ENCODE measurements at regions of chr2 and their contacts with region 1.

Region 1: DNA sequence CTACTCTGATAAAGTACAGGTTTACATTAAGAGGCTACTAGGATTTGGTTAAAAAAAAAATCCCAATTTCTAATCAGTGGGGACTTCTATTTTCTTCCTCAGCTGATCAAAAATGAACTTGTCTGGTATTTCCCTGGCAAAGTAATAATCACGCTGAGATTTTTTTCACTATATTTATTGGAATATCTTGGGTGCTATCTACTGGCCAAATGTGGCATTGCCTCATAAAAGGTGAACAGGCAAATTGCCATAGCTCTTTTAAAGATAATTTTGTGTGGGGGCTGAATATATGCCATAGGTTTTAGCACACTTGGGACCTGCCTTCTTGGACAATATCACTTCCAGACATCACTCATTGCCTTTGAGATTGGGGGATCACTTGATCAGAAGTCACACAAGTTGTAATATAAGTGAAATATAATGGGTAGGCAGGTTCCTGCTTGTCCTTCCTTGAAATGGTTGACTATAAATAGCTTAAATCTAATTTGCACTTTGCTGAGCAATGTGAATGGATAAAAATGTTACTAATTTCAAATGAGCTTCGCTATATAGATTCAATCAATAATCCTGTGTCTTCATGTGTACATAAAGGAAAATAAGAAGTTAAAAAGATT is 7.0 kb upstream of the NXPH2 start:
- DNase-seq: no peak
- ATAC-seq: no peak
- H3K4me3 ChIP-seq: no peak overlapping the region
- H3K27ac ChIP-seq: no peak overlapping the region
- H3K4me1 ChIP-seq: no peaks in the 10 kb centered on the region
- H3K27me3 ChIP-seq: peaks cover 0 to 8% (median 0%) of the 10 kb centered on the region in 9 donors
- CTCF ChIP-seq: peak; percentile 48 to 78 (median 70)
- POLR2A ChIP-seq: no peak

Region 2: DNA sequence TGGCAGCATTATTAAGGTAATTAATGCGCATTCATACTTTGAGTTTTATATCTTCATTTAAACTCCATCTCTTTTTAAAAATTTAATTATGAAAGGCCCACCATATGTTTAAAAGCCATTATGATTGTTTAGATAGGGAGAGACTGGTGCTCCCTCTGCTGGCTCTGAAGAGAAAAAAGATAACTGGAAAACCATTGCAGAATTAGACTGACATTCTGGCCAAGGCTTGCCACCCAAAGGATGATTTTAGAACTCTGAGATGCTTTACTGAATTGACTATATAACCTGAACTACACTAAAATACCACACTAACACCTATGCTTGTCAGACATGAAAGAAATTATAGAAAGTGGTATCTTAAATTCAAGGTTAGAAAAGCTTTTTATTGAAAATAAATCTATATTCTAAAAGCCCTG is 413.2 kb before region 1 on chr2:
- intact Hi-C with region 1: loop called in 3 of 10 experiments (anchors 10 kb)
- DNase-seq: no peak
- ATAC-seq: no peak
- H3K4me3 ChIP-seq: no peak overlapping the region
- H3K27ac ChIP-seq: no peak overlapping the region
- H3K4me1 ChIP-seq: no peaks in the 10 kb centered on the region
- H3K27me3 ChIP-seq: no peaks in the 10 kb centered on the region
- CTCF ChIP-seq: peak; percentile 37 to 74 (median 61)
- POLR2A ChIP-seq: no peak

Region 3: DNA sequence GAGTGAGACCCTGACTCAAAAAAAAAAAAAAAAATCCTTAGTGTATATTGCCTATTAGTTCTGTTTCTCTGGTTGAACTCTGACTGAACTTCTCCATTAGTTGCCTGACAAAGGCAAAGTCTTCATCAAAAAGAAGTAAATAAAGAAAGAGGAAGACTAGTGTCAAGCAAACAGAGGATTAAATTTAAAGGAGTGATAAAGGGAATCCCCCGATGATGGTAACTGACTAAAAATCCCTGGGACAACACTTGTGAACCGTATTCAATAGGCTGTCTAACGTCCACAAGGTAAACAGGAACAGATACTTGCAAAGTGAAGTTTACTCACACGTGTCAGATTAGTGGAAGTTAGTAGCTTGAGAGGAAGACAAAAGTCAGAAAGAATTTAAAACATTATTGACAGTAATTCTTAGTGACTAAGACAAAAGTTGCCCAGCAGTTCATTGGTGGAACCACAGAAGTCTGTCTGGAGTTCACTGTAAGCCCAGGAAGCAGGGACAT is 311.8 kb before region 1 on chr2:
- intact Hi-C with region 1: loop called in 2 of 10 experiments (anchors 10 kb)
- DNase-seq: no peak
- ATAC-seq: no peak
- H3K4me3 ChIP-seq: no peak overlapping the region
- H3K27ac ChIP-seq: peak overlapping the region in 1 of 12 donors; percentile 18
- H3K4me1 ChIP-seq: peaks cover 0 to 12% (median 0%) of the 10 kb centered on the region in 12 donors
- H3K27me3 ChIP-seq: no peaks in the 10 kb centered on the region
- CTCF ChIP-seq: no peak
- POLR2A ChIP-seq: no peak